Gastrocnemius medialis (tissue), 4 donors: ENCODE measurements at regions of chrX and their contacts with region 1.

Region 1: GRCh38 chrX:109732780-109733657 is at the start of gene ACSL4:
- DNase-seq: peak; percentile 65 to 80
- ATAC-seq: peak; percentile 74 to 85
- H3K4me3 ChIP-seq: peak within 1 kb of the TSS; percentile 62 to 85 (median 80)
- H3K27ac ChIP-seq: peak within 1 kb of the TSS; percentile 82 to 91 (median 86)
- H3K4me1 ChIP-seq: peaks cover 0 to 5% of the 10 kb centered on the region in 2 donors
- H3K27me3 ChIP-seq: no peaks in the 10 kb centered on the region
- CTCF ChIP-seq: no peak
- POLR2A ChIP-seq: peak; percentile 70 to 86
- total RNA-seq, gene ACSL4: 18.7 to 259 (median 132) TPM

Region 2: DNA sequence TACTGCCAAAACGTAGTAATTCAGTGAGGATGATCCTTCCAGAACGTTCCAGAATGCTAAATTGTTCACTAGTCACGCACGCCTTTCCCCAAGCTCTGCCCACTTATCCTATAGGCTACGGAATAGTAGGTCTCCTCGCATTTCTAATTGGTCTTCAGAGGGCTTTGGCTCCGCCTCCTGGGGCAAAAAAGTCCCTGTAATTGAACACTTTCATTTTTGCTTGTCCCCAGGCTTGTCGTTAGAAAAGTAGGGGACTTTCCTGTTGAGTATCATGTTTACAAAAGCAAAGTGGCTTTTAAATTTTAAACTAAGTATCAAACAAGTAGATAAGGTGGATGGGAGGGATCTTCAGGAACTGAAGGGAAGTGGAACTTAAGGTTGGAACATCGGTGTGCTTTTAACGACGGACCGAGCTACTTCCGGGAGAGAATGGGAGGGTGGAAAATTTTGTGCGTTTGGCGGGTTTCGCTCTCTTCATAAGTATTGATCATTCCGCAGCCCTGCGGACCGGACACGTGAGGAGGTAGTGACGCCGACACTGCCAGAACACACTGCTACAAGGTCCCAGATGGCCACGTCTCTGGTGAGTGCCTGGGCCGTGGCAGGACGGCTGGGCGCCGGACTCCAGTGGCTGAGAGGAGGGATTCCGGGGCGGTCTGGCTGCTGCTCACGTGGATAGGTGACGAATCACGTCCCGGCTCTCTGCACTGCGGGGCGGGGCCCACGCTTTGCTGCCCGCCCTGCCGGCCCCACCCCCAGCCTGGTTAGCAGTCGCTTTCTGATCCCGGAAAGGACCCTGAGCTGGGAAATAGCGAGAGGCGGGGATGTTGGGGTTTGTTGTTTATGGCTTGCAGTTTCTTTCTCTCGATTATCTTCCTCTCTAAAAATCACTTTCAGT is 196.3 kb before region 1 on chrX and contains the start of gene NXT2:
- in situ Hi-C with region 1: no loop called
- intact Hi-C with region 1: loop called (anchors 2 kb)
- DNase-seq: peak; percentile 79 to 89
- ATAC-seq: peak; percentile 97 to 98
- H3K4me3 ChIP-seq: peak within 1 kb of the TSS; percentile 62 to 71 (median 64)
- H3K27ac ChIP-seq: peak within 1 kb of the TSS; percentile 81 to 95 (median 88)
- H3K4me1 ChIP-seq: no peaks in the 10 kb centered on the region
- H3K27me3 ChIP-seq: peaks cover 0 to 9% (median 5%) of the 10 kb centered on the region in 3 donors
- CTCF ChIP-seq: no peak
- POLR2A ChIP-seq: peak; percentile 67 to 75
- total RNA-seq, gene NXT2: 1.8 to 5.3 (median 3.3) TPM

Region 3: DNA sequence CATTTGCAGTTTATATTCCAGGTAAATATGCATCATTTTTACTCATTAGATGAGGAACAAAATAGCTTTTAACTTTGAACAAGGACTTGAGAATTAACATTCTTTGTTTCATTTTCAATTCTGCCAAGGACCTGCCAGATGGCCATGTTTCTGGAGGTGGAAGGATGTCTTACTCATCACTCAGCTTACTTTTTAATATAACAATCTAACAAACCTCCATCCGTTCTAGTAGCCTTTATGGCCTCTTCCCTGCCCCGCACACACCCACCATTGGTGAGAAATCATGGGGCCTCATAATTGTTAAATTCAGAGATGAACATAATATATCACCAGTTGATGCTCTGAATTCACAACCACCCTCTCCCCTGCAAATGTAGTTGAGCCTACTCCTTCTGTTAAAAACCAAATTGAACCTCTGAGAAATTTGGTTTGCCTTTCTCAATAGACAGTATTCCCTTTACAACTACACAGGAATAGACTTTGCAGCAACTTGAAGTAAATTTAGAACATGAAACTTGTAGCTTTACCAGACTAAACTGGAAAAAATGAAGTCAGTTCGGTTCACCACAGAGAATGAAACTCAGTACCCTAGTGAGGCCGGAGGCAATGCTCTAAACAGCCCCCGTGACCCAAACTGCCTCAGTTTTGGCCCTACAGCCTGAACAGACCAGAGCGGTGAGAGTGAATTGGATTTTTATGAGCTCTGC is 50.1 kb after region 1 on chrX:
- in situ Hi-C with region 1: no loop called
- intact Hi-C with region 1: no loop called
- DNase-seq: no peak
- ATAC-seq: no peak
- H3K4me3 ChIP-seq: no peak overlapping the region
- H3K27ac ChIP-seq: no peak overlapping the region
- H3K4me1 ChIP-seq: no peaks in the 10 kb centered on the region
- H3K27me3 ChIP-seq: no peaks in the 10 kb centered on the region
- CTCF ChIP-seq: no peak
- POLR2A ChIP-seq: no peak

Region 4: DNA sequence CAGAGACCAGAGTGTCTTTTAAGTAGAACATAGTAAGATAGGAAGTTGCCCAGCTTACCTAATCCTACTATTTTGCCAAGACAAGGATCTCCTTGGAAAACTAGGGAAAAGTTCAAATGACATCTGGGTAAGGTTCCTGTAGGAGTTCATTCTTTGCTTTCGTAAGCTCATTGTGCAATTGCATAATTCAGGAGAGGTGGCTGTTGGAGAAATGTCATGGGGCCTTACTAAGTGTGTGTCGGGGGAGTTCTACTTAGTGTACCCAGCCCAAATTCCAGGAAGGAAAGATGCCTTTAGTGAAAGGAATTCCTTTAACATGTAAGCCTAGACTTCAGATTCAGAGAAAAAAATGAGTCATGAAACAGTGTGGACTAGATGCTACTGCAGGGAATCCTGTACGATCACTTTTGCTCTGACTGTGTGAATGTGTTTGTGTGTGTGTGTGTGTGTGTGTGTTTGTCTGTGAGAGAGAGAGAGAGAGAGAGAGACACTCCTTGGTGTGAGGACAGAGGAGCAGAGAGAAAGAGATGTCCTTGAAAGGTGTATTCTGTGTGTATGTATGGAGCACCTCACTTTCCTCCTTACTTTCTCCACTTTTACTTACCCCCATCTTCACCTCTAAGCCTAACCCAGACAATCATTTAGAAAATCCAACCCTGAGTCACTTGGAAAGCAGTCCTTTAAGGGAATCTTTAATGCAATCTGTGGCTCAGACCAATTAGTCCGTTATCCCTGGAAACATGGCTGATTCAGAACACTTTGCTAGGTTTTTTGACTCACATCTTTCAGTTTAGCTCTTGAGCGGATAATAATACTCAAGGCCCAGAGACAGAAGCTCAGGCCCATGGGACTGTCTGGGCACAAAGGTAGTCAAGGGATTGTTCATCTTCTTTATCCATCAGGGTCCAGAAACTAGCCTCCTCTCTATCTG is 114.5 kb after region 1 on chrX:
- in situ Hi-C with region 1: no loop called
- intact Hi-C with region 1: loop called (anchors 2 kb)
- DNase-seq: peak in 1 of 2 donors; percentile 24
- ATAC-seq: peak; percentile 36 to 62
- H3K4me3 ChIP-seq: no peak overlapping the region
- H3K27ac ChIP-seq: no peak overlapping the region
- H3K4me1 ChIP-seq: no peaks in the 10 kb centered on the region
- H3K27me3 ChIP-seq: no peaks in the 10 kb centered on the region
- CTCF ChIP-seq: no peak
- POLR2A ChIP-seq: no peak

Region 5: DNA sequence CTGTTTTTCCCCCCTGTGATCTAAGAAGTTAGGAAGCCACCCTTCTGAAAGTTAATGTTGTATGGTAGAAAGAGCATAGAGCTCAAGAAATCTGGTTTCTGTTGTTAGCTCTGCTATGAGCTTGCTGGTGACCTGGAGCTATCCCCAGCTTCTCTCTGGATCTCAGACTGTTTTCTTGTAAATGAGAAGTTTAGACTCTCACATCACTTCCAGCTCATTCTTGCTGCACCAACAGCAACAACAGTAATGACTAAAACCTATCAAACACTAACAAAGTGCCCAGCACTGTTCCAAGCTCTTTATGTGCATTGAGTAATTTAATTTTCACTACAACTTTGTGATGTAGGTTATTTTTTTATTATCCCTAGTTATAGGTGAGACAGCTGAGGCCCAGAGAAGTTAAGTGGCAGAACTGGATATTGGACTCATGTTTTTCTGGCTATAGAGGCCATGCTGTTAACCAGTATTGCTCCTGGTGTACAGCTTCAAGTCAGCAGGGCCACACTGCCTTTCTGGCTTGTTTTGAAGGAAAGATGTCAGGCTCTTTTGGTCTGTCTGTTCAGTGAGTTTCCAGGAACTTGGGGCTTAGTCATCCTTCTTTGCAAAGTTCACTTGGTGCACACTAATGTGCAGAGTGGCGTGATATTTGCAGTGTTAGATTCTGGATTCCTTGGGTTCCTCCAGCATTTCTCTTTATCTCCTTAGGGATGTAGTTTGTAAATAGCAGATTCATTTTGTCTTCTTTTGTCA is 242.1 kb after region 1 on chrX:
- in situ Hi-C with region 1: no loop called
- intact Hi-C with region 1: no loop called
- DNase-seq: no peak
- ATAC-seq: no peak
- H3K4me3 ChIP-seq: no peak overlapping the region
- H3K27ac ChIP-seq: no peak overlapping the region
- H3K4me1 ChIP-seq: no peaks in the 10 kb centered on the region
- H3K27me3 ChIP-seq: no peaks in the 10 kb centered on the region
- CTCF ChIP-seq: no peak
- POLR2A ChIP-seq: no peak

Region 6: GRCh38 chrX:110317820-110318658 is 585.0 kb after region 1 on chrX and contains the start of gene AMMECR1:
- in situ Hi-C with region 1: no loop called
- intact Hi-C with region 1: loop called (anchors 10 kb)
- DNase-seq: peak; percentile 44 to 72
- ATAC-seq: peak; percentile 90
- H3K4me3 ChIP-seq: peak within 1 kb of the TSS; percentile 67 to 85 (median 76)
- H3K27ac ChIP-seq: peak within 1 kb of the TSS; percentile 83 to 92 (median 88)
- H3K4me1 ChIP-seq: peaks cover 6 to 7% of the 10 kb centered on the region in 2 donors
- H3K27me3 ChIP-seq: no peaks in the 10 kb centered on the region
- CTCF ChIP-seq: peak in 1 of 5 experiments; percentile 3
- POLR2A ChIP-seq: peak; percentile 46 to 59
- total RNA-seq, gene AMMECR1: 1.2 to 2.6 (median 1.9) TPM